Activated naive CD4-positive, alpha-beta T cell treated with anti-CD3 and anti-CD28 coated beads for 36 hours (primary cell): ENCODE measurements at regions of chr5 and their contacts with region 1.

Region 1: DNA sequence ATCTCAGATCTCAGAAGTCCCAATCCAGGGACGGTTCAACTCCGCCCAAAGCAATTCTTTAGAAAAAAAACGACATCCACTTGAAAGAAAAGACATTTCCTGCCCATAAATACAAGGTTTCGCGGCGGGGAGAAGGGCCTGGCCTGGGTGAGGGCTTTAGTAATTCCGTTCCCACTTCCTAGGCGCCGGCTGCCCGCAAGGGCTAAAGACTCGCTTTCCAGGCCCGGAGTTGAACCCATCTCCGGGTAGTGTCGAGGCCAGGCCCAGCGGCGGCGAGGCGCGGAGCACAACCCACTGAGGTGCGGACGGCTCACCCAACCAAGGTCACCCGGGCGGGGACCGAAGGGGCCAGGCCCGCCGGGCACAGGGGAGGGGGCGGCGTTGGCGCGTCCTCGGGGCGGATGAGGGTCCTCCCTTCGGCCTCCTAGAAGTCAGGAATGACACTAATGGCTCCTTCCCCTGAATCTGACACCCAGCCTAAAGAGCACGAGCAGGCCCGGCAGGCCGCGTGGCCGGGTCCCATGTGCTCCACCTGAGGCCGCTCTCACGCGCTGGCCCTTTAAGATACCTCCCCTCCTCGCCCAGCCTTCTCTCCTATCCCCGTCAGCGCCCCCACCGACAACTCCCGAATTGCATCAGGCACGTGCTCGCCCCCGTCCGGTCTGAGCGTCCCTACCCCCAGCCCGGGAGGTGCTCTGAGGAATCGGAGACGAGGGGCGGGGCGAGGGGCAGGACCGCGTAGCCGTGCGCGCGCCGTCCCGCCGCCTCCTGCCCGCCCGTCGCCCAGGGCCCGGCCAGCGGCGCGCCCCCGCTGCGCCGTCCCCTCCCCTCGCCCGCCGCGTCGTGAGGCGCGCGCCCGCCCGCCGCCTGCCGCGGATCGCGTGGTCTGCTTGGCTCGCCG is 467 bp upstream of the LARP1 start:
- DNase-seq: peak; percentile 99
- H3K4me3 Mint-ChIP-seq: peak overlapping the region; percentile 93
- H3K27ac Mint-ChIP-seq: peak overlapping the region; percentile 97
- H3K4me1 Mint-ChIP-seq: peaks cover 31% of the 10 kb centered on the region
- H3K27me3 Mint-ChIP-seq: no peaks in the 10 kb centered on the region

Region 2: GRCh38 chr5:154202379-154203260 is 552.1 kb before region 1 on chr5:
- CTCF ChIA-PET with region 1: no interaction called
- intact Hi-C with region 1: loop called (anchors 5 kb)
- DNase-seq: peak; percentile 86
- H3K4me3 Mint-ChIP-seq: peak overlapping the region; percentile 69
- H3K27ac Mint-ChIP-seq: peak overlapping the region; percentile 92
- H3K4me1 Mint-ChIP-seq: peaks cover 58% of the 10 kb centered on the region
- H3K27me3 Mint-ChIP-seq: no peaks in the 10 kb centered on the region

Region 3: GRCh38 chr5:154647114-154647760 is 107.5 kb before region 1 on chr5:
- CTCF ChIA-PET with region 1: interaction called, 3 read pairs
- intact Hi-C with region 1: loop called (anchors 1 kb)
- DNase-seq: peak; percentile 14
- H3K4me3 Mint-ChIP-seq: peak overlapping the region; percentile 55
- H3K27ac Mint-ChIP-seq: no peak overlapping the region
- H3K4me1 Mint-ChIP-seq: peaks cover 12% of the 10 kb centered on the region
- H3K27me3 Mint-ChIP-seq: peaks cover 16% of the 10 kb centered on the region

Region 4: DNA sequence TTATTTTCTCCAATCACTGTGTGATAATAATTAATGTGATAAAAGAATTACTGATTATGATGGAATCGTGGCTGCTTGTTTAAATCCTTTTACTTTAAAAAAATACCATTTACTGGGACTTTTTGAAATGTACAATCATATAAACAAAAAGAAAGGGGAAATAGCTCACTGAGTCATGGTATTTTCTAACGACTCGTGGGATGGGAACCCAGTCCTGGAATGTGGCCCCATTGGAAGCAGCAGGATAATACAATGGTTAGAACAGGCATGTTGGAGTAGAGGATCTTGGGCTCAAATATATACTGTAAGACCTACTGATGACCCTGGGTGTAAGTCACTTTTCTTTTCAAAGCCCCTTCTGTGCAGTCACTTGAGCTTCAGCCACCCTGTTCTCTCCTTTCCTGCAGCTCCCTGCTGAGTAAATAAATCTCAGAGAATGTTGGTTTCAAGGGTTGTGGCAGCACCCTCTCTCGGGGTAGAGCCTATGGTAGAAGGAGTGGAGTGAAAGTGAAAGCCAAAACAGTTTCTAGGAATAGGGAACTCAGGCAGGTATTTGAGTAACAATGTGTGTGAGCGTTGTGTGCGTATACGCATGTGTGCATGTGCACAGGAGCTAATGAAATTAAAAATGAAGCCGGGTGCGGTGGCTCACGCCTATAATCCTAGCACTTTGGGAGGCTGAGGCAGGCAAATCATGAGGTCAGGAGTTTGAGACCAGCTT is 40.3 kb before region 1 on chr5:
- CTCF ChIA-PET with region 1: interaction called, 3 read pairs
- intact Hi-C with region 1: loop called (anchors 2 kb)
- DNase-seq: peak; percentile 27
- H3K4me3 Mint-ChIP-seq: no peak overlapping the region
- H3K27ac Mint-ChIP-seq: no peak overlapping the region
- H3K4me1 Mint-ChIP-seq: peaks cover 10% of the 10 kb centered on the region
- H3K27me3 Mint-ChIP-seq: no peaks in the 10 kb centered on the region

Region 5: DNA sequence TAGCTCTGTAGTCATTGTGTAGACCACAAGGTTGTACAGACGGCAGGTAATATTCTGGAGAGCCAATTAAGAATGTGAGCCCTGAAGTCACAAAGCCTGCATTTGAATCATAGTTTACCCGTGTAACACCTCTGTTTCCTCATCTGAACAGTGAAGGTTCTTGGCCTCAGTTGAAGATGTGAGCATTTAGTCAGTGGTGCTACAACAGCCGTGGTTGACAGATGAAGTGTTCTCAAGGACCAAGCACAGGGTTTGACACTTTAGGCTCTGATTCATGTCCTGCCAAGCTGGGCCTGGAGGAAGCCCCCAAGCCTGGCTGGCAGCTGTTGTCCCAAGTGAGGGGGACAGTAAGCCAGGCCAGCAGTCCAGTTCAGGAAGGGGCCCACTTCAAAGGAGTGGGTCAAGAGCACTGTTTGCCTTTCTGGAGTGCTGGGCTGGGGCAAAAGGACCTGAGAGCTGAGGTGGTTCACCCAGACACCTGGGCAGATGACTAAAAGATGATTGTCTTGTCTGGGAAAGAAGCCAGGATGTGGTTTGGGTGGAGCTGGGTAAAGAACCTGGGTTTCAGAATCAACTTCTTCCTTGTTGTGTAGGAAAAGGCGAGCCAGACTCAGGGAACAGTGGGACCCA is 75.0 kb after region 1 on chr5:
- CTCF ChIA-PET with region 1: interaction called, 3 read pairs
- intact Hi-C with region 1: loop called (anchors 1 kb)
- DNase-seq: peak; percentile 71
- H3K4me3 Mint-ChIP-seq: no peak overlapping the region
- H3K27ac Mint-ChIP-seq: peak overlapping the region; percentile 80
- H3K4me1 Mint-ChIP-seq: peaks cover 42% of the 10 kb centered on the region
- H3K27me3 Mint-ChIP-seq: no peaks in the 10 kb centered on the region

Region 6: GRCh38 chr5:154934881-154935280 is 180.2 kb after region 1 on chr5:
- CTCF ChIA-PET with region 1: no interaction called
- intact Hi-C with region 1: no loop called
- DNase-seq: no peak
- H3K4me3 Mint-ChIP-seq: no peak overlapping the region
- H3K27ac Mint-ChIP-seq: no peak overlapping the region
- H3K4me1 Mint-ChIP-seq: peaks cover 36% of the 10 kb centered on the region
- H3K27me3 Mint-ChIP-seq: no peaks in the 10 kb centered on the region